B cell (primary cell): ENCODE measurements at regions of chr3 and their contacts with region 1.

Region 1: GRCh38 chr3:42012935-42013690 is 51.2 kb upstream of the ULK4 start:
- DNase-seq: peak; percentile 92
- ATAC-seq: peak; percentile 71
- H3K4me3 ChIP-seq: peak overlapping the region; percentile 60 to 96 (median 92)
- H3K4me3 Mint-ChIP-seq: peak overlapping the region; percentile 97
- H3K27ac ChIP-seq: peak overlapping the region; percentile 99 to 100
- H3K27ac Mint-ChIP-seq: peak overlapping the region; percentile 99
- H3K4me1 ChIP-seq: peaks cover 44 to 49% of the 10 kb centered on the region in 2 donors
- H3K4me1 Mint-ChIP-seq: peaks cover 56% of the 10 kb centered on the region
- H3K27me3 ChIP-seq: no peaks in the 10 kb centered on the region
- H3K27me3 Mint-ChIP-seq: no peaks in the 10 kb centered on the region
- CTCF ChIP-seq: no peak

Region 2: GRCh38 chr3:40452876-40453730 is 1560.0 kb before region 1 on chr3:
- CTCF ChIA-PET with region 1: no interaction called
- POLR2A ChIA-PET with region 1: no interaction called
- intact Hi-C with region 1: loop called (anchors 5 kb)
- DNase-seq: peak; percentile 97
- ATAC-seq: peak; percentile 90
- H3K4me3 ChIP-seq: peak overlapping the region; percentile 60 to 88 (median 77)
- H3K4me3 Mint-ChIP-seq: peak overlapping the region; percentile 96
- H3K27ac ChIP-seq: peak overlapping the region; percentile 92 to 95
- H3K27ac Mint-ChIP-seq: peak overlapping the region; percentile 99
- H3K4me1 ChIP-seq: peaks cover 24 to 28% of the 10 kb centered on the region in 2 donors
- H3K4me1 Mint-ChIP-seq: peaks cover 36% of the 10 kb centered on the region
- H3K27me3 ChIP-seq: no peaks in the 10 kb centered on the region
- H3K27me3 Mint-ChIP-seq: no peaks in the 10 kb centered on the region
- CTCF ChIP-seq: peak; percentile 6

Region 3: DNA sequence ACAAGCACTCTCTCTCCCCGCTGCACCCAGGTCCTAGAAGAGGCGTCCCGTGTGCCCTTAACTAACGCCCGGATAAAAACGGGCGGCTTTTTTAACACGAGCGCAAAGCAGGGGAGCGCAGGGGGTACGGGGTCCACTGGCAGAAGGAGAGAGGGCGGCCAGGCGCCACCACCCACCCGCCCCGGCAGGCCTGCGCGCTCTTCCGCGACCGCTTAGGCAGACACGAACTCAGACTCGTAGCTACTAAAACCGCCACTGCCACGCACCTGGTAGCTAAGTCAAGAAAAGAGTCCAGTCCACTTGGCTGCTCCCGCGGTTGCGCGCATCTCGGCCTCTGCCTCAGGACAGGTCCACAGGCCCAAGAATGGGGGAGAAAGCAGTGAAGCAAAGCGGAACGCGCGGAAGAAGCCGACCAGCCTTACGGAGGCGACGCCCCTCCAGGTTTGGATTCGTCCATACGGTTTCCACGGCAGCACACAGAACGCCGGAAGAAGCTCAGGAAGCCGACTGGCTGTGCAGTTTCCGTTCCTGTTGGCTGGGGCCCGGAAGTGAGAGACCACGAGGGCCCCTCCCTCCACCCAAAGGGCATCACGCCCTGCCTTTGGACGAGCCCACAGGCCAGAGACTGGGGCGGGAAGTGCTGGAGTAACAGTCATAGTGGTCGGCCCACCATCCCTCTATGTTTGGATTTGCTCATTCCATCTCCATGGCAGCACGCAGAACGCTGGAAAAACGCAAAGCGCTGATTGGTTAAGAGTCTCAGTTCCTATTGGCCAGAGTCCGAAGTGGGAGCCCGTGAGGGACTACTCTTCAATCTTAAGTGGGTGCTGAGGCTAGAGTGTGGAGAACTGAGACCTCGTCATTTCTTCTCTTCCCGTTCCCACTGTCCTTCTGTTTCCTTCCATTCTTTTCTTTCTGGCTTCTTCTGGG is 51.1 kb before region 1 on chr3 and contains the start of gene ULK4:
- CTCF ChIA-PET with region 1: interaction called, 9 read pairs
- POLR2A ChIA-PET with region 1: interaction called, 15 read pairs
- intact Hi-C with region 1: loop called (anchors 1 kb)
- DNase-seq: peak; percentile 99
- ATAC-seq: peak; percentile 87
- H3K4me3 ChIP-seq: peak within 1 kb of the TSS; percentile 75 to 92 (median 88)
- H3K4me3 Mint-ChIP-seq: peak within 1 kb of the TSS; percentile 98
- H3K27ac ChIP-seq: peak within 1 kb of the TSS; percentile 90 to 99
- H3K27ac Mint-ChIP-seq: peak within 1 kb of the TSS; percentile 99
- H3K4me1 ChIP-seq: peaks cover 10 to 16% of the 10 kb centered on the region in 2 donors
- H3K4me1 Mint-ChIP-seq: peaks cover 19% of the 10 kb centered on the region
- H3K27me3 ChIP-seq: no peaks in the 10 kb centered on the region
- H3K27me3 Mint-ChIP-seq: no peaks in the 10 kb centered on the region
- CTCF ChIP-seq: no peak
- total RNA-seq, gene ULK4: 27.2 and 33.7 TPM in 2 replicates

Region 4: GRCh38 chr3:42025370-42026138 is 12.4 kb after region 1 on chr3:
- CTCF ChIA-PET with region 1: interaction called, 4 read pairs
- POLR2A ChIA-PET with region 1: interaction called, 5 read pairs
- intact Hi-C with region 1: loop called (anchors 1 kb)
- DNase-seq: peak; percentile 65
- ATAC-seq: peak; percentile 62
- H3K4me3 ChIP-seq: peak overlapping the region in 2 of 5 experiments; percentile 14 to 18
- H3K4me3 Mint-ChIP-seq: peak overlapping the region; percentile 68
- H3K27ac ChIP-seq: peak overlapping the region; percentile 59 to 81
- H3K27ac Mint-ChIP-seq: peak overlapping the region; percentile 69
- H3K4me1 ChIP-seq: peaks cover 56 to 70% of the 10 kb centered on the region in 2 donors
- H3K4me1 Mint-ChIP-seq: peaks cover 76% of the 10 kb centered on the region
- H3K27me3 ChIP-seq: no peaks in the 10 kb centered on the region
- H3K27me3 Mint-ChIP-seq: no peaks in the 10 kb centered on the region
- CTCF ChIP-seq: no peak

Region 5: GRCh38 chr3:42071904-42072592 is 58.9 kb after region 1 on chr3:
- CTCF ChIA-PET with region 1: interaction called, 7 read pairs
- POLR2A ChIA-PET with region 1: interaction called, 7 read pairs
- intact Hi-C with region 1: loop called (anchors 1 kb)
- DNase-seq: peak; percentile 55
- ATAC-seq: peak; percentile 14
- H3K4me3 ChIP-seq: peak overlapping the region in 4 of 5 experiments; percentile 12 to 36 (median 30)
- H3K4me3 Mint-ChIP-seq: peak overlapping the region; percentile 78
- H3K27ac ChIP-seq: peak overlapping the region; percentile 51 to 80
- H3K27ac Mint-ChIP-seq: peak overlapping the region; percentile 82
- H3K4me1 ChIP-seq: peaks cover 66 to 79% of the 10 kb centered on the region in 2 donors
- H3K4me1 Mint-ChIP-seq: peaks cover 82% of the 10 kb centered on the region
- H3K27me3 ChIP-seq: no peaks in the 10 kb centered on the region
- H3K27me3 Mint-ChIP-seq: no peaks in the 10 kb centered on the region
- CTCF ChIP-seq: no peak

Region 6: GRCh38 chr3:42080452-42080891 is 67.4 kb after region 1 on chr3:
- CTCF ChIA-PET with region 1: interaction called, 9 read pairs
- POLR2A ChIA-PET with region 1: interaction called, 14 read pairs
- intact Hi-C with region 1: loop called (anchors 1 kb)
- DNase-seq: peak; percentile 56
- ATAC-seq: peak; percentile 93
- H3K4me3 ChIP-seq: peak overlapping the region in 1 of 5 experiments; percentile 7
- H3K4me3 Mint-ChIP-seq: peak overlapping the region; percentile 87
- H3K27ac ChIP-seq: peak overlapping the region; percentile 65 to 84
- H3K27ac Mint-ChIP-seq: peak overlapping the region; percentile 99
- H3K4me1 ChIP-seq: peaks cover 48 to 57% of the 10 kb centered on the region in 2 donors
- H3K4me1 Mint-ChIP-seq: peaks cover 77% of the 10 kb centered on the region
- H3K27me3 ChIP-seq: no peaks in the 10 kb centered on the region
- H3K27me3 Mint-ChIP-seq: no peaks in the 10 kb centered on the region
- CTCF ChIP-seq: no peak

Region 7: GRCh38 chr3:42600111-42600988 is 587.2 kb after region 1 on chr3 and contains the start of gene NKTR:
- CTCF ChIA-PET with region 1: no interaction called
- POLR2A ChIA-PET with region 1: no interaction called
- intact Hi-C with region 1: loop called (anchors 2 kb)
- DNase-seq: peak; percentile 100
- ATAC-seq: peak; percentile 93
- H3K4me3 ChIP-seq: peak within 1 kb of the TSS; percentile 80 to 88 (median 86)
- H3K4me3 Mint-ChIP-seq: peak within 1 kb of the TSS; percentile 99
- H3K27ac ChIP-seq: peak within 1 kb of the TSS; percentile 84 to 88
- H3K27ac Mint-ChIP-seq: peak within 1 kb of the TSS; percentile 99
- H3K4me1 ChIP-seq: peaks cover 11 to 19% of the 10 kb centered on the region in 2 donors
- H3K4me1 Mint-ChIP-seq: peaks cover 30% of the 10 kb centered on the region
- H3K27me3 ChIP-seq: no peaks in the 10 kb centered on the region
- H3K27me3 Mint-ChIP-seq: no peaks in the 10 kb centered on the region
- CTCF ChIP-seq: no peak
- total RNA-seq, gene NKTR: 227 and 233 TPM in 2 replicates